ENCODE measurements at regions of chr6 and their contacts with region 1.

Region 1: DNA sequence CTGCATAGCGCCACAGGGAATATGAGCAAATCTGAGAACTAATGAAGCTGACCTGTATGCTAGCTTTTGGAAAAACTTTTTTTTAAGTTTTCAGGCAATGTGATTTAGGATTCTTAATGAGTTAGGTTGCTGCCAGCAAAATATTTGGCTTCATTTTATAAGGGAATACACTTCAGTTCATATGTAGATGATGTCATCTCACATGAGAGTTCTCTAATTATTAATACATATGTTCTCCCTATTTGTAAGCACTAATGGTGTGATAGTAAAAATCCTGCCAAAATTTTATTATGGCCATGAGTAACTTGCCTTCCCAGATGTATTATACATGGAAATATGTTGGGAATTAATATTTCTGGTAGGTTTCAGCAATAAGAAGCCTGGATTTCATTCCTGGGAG is 573.8 kb downstream of the EPM2A start:
- DNase-seq: no peak
- H3K4me3 ChIP-seq: no peak overlapping the region
- H3K27ac ChIP-seq: no peak overlapping the region
- H3K4me1 ChIP-seq: no peaks in the 10 kb centered on the region
- H3K27me3 ChIP-seq: no peaks in the 10 kb centered on the region
- CTCF ChIP-seq: no peak
- POLR2A ChIP-seq: no peak

Region 2: GRCh38 chr6:144149891-144150709 is 1011.4 kb before region 1 on chr6 and contains the start of gene STX11:
- intact Hi-C with region 1: loop called (anchors 10 kb)
- DNase-seq: peak; percentile 21 to 54
- H3K4me3 ChIP-seq: peak within 1 kb of the TSS; percentile 65 to 85 (median 79)
- H3K27ac ChIP-seq: peak within 1 kb of the TSS; percentile 76 to 79
- H3K4me1 ChIP-seq: no peaks in the 10 kb centered on the region
- H3K27me3 ChIP-seq: no peaks in the 10 kb centered on the region
- CTCF ChIP-seq: no peak
- POLR2A ChIP-seq: no peak
- total RNA-seq, gene STX11: 20.0 to 46.4 (median 22.8) TPM

Measured in breast epithelium (tissue), 4 donors.